Tibial artery (tissue), 4 donors: ENCODE measurements at regions of chr14 and their contacts with region 1.

Region 1: GRCh38 chr14:70972107-70972976 is 65.1 kb downstream of the PCNX1 start:
- DNase-seq: peak; percentile 85 to 92
- H3K4me3 ChIP-seq: no peak overlapping the region
- H3K27ac ChIP-seq: no peak overlapping the region
- H3K4me1 ChIP-seq: no peaks in the 10 kb centered on the region
- H3K27me3 ChIP-seq: no peaks in the 10 kb centered on the region
- CTCF ChIP-seq: peak; percentile 80 to 94

Region 2: GRCh38 chr14:70595443-70596185 is 376.7 kb before region 1 on chr14:
- intact Hi-C with region 1: loop called (anchors 5 kb)
- DNase-seq: no peak
- H3K4me3 ChIP-seq: no peak overlapping the region
- H3K27ac ChIP-seq: no peak overlapping the region
- H3K4me1 ChIP-seq: peaks cover 0 to 14% (median 12%) of the 10 kb centered on the region in 4 donors
- H3K27me3 ChIP-seq: no peaks in the 10 kb centered on the region
- CTCF ChIP-seq: no peak

Region 3: DNA sequence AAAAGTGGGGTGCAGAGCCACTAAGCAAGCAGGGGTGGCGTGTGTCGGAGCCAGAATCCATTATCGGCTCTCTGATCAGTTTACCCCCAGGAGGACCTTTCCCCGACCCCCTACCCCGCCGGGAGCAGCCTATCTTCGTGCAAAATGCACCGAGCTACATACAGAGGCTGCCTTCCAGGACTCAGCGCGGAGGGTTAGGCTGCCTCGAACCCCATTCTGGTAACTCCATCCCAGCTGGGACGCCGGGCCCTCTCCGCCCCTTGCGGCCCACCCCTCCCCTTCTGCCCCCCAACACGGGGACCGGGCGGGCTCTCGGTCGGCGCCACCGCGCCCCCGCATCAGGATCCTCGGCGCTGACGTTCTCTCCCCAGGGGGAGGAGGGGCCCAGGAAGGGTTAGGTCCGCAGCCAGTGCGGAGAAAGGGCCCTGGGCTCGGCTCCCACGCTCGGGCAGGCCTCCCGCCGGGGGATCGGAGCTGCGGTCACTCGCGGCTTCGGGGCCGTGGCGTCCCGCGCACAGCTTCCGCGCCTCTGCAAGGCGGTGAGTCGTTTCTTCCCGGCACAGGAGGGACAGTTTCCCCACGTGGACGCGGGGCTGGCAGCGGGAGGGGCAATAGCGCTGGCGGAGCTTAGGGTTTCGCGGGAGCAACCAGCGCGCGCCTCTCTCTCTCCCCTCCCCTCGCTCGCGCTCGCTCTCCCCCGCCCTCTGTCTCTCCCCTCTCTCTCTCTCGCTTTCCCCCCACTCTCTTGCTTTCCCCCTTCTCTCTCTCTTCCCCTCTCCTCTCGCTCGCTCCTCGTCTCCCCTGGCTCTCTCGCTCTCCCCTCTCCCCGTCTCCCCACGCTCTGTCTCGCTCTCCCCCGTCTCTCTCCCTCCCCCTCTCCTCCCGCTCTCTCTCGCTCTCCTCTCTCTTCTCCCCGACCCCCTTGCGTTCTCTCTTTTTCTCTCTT is 150.5 kb before region 1 on chr14:
- intact Hi-C with region 1: loop called (anchors 2 kb)
- DNase-seq: peak; percentile 36 to 73
- H3K4me3 ChIP-seq: peak overlapping the region; percentile 49 to 61
- H3K27ac ChIP-seq: peak overlapping the region in 1 of 2 donors; percentile 5
- H3K4me1 ChIP-seq: peaks cover 0 to 25% (median 16%) of the 10 kb centered on the region in 4 donors
- H3K27me3 ChIP-seq: peaks cover 0 to 18% of the 10 kb centered on the region in 2 donors
- CTCF ChIP-seq: no peak

Region 4: GRCh38 chr14:71029236-71029781 is 57.0 kb after region 1 on chr14:
- intact Hi-C with region 1: no loop called
- DNase-seq: no peak
- H3K4me3 ChIP-seq: no peak overlapping the region
- H3K27ac ChIP-seq: no peak overlapping the region
- H3K4me1 ChIP-seq: no peaks in the 10 kb centered on the region
- H3K27me3 ChIP-seq: no peaks in the 10 kb centered on the region
- CTCF ChIP-seq: no peak